Mammary epithelial cell (primary cell): ENCODE measurements at regions of chr6 and their contacts with region 1.

Region 1: DNA sequence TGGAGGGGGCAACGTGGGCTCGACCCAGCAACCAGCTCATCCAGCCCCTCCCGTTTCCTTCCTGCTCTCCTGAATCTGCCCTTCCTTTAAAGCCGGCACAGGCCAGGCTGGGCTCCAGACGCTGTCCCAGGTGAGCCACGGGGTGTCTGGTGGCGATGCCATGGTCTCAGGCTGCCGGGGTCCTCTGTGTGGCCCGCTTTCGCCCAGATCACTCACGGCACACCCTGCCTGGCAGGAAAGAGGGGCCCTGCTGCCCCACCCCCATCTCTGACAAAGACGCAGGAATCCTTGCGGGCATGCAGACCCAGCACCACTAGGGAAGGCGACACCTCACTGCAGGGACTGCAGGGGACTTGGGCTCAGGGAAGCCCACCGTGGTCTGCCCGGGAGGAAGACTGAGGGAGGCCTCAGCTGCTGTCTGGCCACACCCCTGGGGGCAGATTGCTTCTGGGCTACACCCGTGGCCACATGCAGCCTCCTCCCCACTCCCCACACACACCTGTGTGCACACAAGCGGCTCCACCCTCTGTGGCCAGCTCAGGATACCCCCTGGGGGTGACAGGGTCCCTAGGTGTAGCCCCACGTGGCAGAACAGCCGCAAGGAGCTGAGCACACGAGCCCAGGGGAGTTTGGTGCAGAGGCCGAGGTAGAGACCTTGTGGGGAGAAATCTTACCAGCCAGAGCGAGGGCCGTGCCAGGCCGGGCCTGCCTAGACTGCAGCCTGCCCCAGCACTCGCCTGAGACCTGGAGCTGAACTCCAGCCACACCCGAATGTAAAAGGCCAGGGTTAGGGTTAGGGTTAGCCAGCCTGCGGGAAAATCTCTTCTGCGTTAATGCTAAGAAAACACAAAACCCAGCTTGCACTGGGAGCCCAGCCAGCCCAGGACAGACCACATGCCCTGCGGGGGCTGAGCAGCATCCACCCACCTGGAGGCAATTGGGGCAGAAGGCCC is 104.6 kb downstream of the DLL1 start:
- DNase-seq: peak; percentile 8
- H3K4me3 ChIP-seq: no peak overlapping the region
- H3K27ac ChIP-seq: no peak overlapping the region
- H3K4me1 ChIP-seq: peaks cover 13% of the 10 kb centered on the region
- H3K27me3 ChIP-seq: no peaks in the 10 kb centered on the region
- CTCF ChIP-seq: no peak

Region 2: GRCh38 chr6:170253226-170253909 is 67.1 kb after region 1 on chr6:
- CTCF ChIA-PET with region 1: no interaction called
- dilution Hi-C with region 1: loop called (anchors 5 kb)
- in situ Hi-C with region 1: no loop called
- intact Hi-C with region 1: no loop called
- DNase-seq: no peak
- H3K4me3 ChIP-seq: no peak overlapping the region
- H3K27ac ChIP-seq: no peak overlapping the region
- H3K4me1 ChIP-seq: no peaks in the 10 kb centered on the region
- H3K27me3 ChIP-seq: no peaks in the 10 kb centered on the region
- CTCF ChIP-seq: no peak

Region 3: DNA sequence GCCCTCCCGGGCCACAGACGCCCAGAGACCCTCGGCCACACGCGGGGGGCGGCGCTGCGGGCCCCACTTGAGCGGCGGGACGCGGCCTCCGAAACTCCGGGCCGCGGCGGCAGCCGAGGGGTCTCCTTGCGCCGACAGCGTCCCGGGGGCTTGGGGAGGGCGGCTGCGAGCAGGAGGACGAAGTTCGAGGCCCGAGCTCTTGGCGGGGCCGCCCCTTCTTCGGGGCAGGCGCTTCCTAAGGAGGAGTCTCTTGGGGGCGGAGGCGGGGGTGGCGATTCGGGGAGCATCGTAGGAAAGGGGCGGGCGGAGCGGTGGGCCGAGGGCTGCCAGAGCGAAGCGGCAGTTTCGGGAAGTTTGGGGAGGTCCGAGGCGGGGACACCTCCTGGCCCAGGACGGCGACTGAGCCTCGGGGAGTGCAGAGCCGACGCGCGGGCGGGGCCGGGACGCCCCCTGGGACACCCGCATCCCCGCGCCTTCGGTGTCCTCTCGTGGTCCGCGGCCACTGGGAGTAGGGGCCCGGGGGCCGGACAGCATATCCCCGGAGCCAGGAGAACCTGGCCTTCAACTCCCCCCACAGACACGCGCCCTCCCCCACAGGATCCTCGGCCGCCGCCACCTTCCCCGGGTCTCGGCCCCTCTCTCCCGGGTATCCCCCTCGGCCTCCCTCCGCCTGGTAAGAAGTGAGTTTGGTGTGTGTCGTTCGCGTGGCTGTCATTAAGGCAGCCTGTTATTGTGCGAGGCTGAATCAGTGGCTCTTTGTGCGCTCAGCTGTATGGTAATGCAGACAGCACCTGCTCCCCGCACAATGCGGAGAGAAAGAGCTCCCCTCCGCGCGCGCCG is 105.2 kb after region 1 on chr6:
- CTCF ChIA-PET with region 1: no interaction called
- dilution Hi-C with region 1: no loop called
- in situ Hi-C with region 1: no loop called
- intact Hi-C with region 1: no loop called
- DNase-seq: peak; percentile 60
- H3K4me3 ChIP-seq: peak overlapping the region; percentile 47 to 87 (median 61)
- H3K27ac ChIP-seq: no peak overlapping the region
- H3K4me1 ChIP-seq: peaks cover 39% of the 10 kb centered on the region
- H3K27me3 ChIP-seq: no peaks in the 10 kb centered on the region
- CTCF ChIP-seq: no peak